Spleen (tissue), 13 donors: ENCODE measurements at regions of chr7 and their contacts with region 1.

Region 1: GRCh38 chr7:106542550-106543220 is 118.3 kb downstream of the CCDC71L start:
- DNase-seq: no peak
- H3K4me3 ChIP-seq: no peak overlapping the region
- H3K27ac ChIP-seq: peak overlapping the region in 6 of 8 donors; percentile 25 to 57 (median 47)
- H3K4me1 ChIP-seq: peaks cover 0 to 9% (median 3%) of the 10 kb centered on the region in 6 donors
- H3K27me3 ChIP-seq: no peaks in the 10 kb centered on the region
- CTCF ChIP-seq: peak in 9 of 11 experiments; percentile 37 to 78 (median 61)
- POLR2A ChIP-seq: no peak

Region 2: DNA sequence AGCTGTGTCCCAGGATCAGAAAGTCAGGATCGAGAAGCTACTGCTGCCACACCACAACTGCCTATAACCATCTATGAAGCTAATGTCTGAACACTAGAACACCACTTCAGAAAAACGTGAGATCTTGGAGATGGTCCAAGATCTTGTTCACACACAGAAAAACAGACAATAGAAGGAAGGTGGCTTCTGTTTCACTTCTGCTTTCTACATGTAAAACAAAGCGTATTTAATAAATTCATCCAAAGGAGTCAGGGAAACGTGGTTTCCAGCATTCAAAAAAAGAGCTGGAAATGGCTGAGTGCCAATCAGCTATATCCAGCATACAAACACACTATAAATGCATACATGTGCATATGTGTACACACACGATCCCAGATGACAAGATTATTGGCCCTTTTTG is 188.5 kb after region 1 on chr7:
- intact Hi-C with region 1: loop called (anchors 5 kb)
- DNase-seq: no peak
- H3K4me3 ChIP-seq: peak overlapping the region in 1 of 8 donors; percentile 11
- H3K27ac ChIP-seq: peak overlapping the region in 5 of 8 donors; percentile 5 to 46 (median 32)
- H3K4me1 ChIP-seq: peaks cover 15 to 32% (median 22%) of the 10 kb centered on the region in 6 donors
- H3K27me3 ChIP-seq: no peaks in the 10 kb centered on the region
- CTCF ChIP-seq: no peak
- POLR2A ChIP-seq: no peak

Region 3: GRCh38 chr7:106779877-106780276 is 237.2 kb after region 1 on chr7:
- intact Hi-C with region 1: no loop called
- DNase-seq: no peak
- H3K4me3 ChIP-seq: no peak overlapping the region
- H3K27ac ChIP-seq: no peak overlapping the region
- H3K4me1 ChIP-seq: no peaks in the 10 kb centered on the region
- H3K27me3 ChIP-seq: no peaks in the 10 kb centered on the region
- CTCF ChIP-seq: no peak
- POLR2A ChIP-seq: no peak